ENCODE measurements at regions of chr6 and their contacts with region 1.

Region 1: GRCh38 chr6:16964553-16965501 is 137.0 kb upstream of the STMND1 start:
- DNase-seq: peak; percentile 29
- H3K4me3 ChIP-seq: no peak overlapping the region
- H3K27ac ChIP-seq: peak overlapping the region; percentile 11
- H3K27me3 ChIP-seq: no peaks in the 10 kb centered on the region
- CTCF ChIP-seq: peak; percentile 94

Region 2: GRCh38 chr6:16770701-16771569 is 193.9 kb before region 1 on chr6:
- CTCF ChIA-PET with region 1: interaction called, 10 read pairs
- POLR2A ChIA-PET with region 1: interaction called, 12 read pairs
- DNase-seq: no peak
- H3K4me3 ChIP-seq: no peak overlapping the region
- H3K27ac ChIP-seq: peak overlapping the region; percentile 82
- H3K27me3 ChIP-seq: no peaks in the 10 kb centered on the region
- CTCF ChIP-seq: peak; percentile 87

Region 3: DNA sequence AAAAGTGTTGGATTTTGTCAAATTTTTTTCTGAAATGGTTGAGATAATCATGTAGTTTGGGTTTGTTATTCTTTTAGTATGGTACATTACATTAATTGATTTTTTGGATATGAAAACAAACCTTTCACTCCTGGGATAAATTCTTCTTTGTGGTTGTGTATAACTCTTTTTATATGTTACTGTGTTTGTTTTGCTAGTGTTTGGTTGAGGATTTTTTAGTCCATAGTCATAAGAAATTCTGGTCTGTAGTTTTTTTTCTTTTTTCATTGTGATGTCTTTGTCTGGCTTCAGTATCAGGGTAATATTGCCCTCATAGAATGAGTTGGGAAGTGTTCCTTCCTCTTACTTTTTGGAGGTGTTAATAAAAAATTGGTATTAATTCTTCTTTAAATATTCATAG is 81.4 kb before region 1 on chr6:
- CTCF ChIA-PET with region 1: no interaction called
- POLR2A ChIA-PET with region 1: no interaction called
- DNase-seq: no peak
- H3K4me3 ChIP-seq: no peak overlapping the region
- H3K27ac ChIP-seq: no peak overlapping the region
- H3K27me3 ChIP-seq: no peaks in the 10 kb centered on the region
- CTCF ChIP-seq: no peak

Region 4: DNA sequence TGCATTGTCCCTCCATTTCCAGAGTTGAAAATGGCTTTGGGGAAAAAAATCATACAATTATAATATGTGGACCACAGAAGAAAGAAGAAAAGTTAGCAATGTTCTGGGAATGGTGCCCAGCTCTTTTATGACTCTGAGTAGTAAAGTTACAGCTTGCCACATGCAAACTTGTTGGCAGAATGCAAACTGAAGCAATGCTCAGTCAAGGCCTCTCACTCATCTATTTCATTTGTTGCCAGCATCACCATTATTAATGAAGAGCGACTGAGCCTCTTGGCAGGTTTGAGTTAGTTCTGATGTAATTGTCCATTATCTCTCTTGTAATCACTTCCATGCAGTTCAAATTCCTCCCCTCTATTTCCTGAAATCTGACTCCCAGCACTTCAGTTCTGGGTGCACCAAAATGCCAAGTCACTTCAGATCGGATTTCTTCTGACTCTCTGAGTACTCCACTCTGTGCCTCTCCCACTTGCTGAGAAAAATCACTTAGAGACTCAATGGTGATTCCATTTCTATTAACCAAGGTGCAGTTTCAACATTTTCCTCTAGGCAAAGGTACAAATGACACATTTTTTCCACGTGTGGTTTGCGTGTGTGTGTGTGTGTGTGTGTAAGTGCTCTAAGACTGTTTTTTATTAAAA is 17.3 kb before region 1 on chr6:
- CTCF ChIA-PET with region 1: interaction called, 34 read pairs
- POLR2A ChIA-PET with region 1: no interaction called
- DNase-seq: peak; percentile 92
- H3K4me3 ChIP-seq: no peak overlapping the region; the same call in 1 of the 2 replicates
- H3K27ac ChIP-seq: peak overlapping the region; percentile 90
- H3K27me3 ChIP-seq: no peaks in the 10 kb centered on the region
- CTCF ChIP-seq: no peak

Region 5: GRCh38 chr6:16982807-16983206 is 18.0 kb after region 1 on chr6:
- CTCF ChIA-PET with region 1: interaction called, 14 read pairs
- POLR2A ChIA-PET with region 1: no interaction called
- DNase-seq: peak; percentile 98
- H3K4me3 ChIP-seq: no peak overlapping the region
- H3K27ac ChIP-seq: no peak overlapping the region
- H3K27me3 ChIP-seq: no peaks in the 10 kb centered on the region
- CTCF ChIP-seq: no peak

Region 6: GRCh38 chr6:17012421-17013225 is 47.8 kb after region 1 on chr6:
- CTCF ChIA-PET with region 1: no interaction called
- POLR2A ChIA-PET with region 1: no interaction called
- DNase-seq: peak; percentile 27
- H3K4me3 ChIP-seq: no peak overlapping the region
- H3K27ac ChIP-seq: peak overlapping the region; percentile 21
- H3K27me3 ChIP-seq: no peaks in the 10 kb centered on the region
- CTCF ChIP-seq: peak; percentile 40; the same call in 1 of the 2 replicates